Left cardiac atrium (tissue), 4 donors: ENCODE measurements at regions of chr2 and their contacts with region 1.

Region 1: DNA sequence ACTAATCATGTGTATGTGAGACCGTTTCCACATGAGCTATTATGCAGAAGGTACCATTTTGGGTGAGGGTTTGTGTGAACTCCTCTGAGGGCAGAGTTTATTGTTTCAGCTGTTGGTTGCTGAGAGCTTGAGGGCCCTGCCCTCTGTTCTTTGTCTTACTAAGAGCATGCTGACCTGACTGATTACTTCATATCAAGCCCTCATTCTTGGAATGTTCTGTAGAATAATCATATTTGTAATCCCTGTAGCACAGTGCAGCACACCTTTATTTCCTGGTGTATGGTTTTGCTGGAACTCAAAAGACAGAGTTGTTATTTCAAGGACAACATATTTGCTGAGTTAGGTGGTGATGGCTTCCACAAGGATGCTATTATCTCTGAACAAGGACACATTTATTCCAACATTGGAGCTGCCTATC is 118.5 kb downstream of the GALNT3 start:
- DNase-seq: no peak
- ATAC-seq: no peak

Region 2: DNA sequence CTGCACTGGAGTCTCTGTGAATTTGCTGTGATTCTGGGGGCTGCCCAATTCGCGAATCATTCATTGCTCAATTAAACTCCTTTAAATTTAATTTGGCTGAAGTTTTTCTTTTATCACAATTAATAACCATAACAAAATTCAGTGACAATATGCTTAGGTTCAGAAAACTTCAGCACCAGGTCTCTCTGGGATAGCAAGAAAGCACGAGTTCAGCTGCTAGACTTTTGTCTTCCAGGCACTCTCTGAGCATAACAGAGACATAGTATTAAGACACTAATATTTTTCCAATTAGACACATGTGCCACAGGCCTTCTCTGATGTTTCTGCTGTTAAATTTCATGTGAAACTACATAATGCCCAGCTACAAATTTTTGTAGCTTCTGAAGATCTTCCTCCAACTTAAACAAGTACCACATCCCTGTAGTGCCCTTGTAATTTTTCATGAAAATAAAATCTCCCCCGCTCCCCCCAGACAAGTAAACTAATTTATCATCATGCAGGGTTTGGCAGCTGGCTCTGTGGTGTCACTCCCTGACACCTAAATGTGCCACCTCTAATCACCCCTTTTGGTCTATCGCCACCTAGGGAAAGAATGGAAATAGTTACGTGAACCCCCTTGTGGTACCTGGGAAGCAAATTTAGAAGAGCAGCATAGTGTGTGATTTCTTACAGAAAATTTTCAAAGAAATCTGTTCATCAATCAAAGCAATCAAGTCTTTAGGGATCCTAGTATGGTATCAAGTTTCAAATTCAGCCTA is 111.9 kb before region 1 on chr2:
- intact Hi-C with region 1: no loop called
- DNase-seq: no peak
- ATAC-seq: no peak

Region 3: DNA sequence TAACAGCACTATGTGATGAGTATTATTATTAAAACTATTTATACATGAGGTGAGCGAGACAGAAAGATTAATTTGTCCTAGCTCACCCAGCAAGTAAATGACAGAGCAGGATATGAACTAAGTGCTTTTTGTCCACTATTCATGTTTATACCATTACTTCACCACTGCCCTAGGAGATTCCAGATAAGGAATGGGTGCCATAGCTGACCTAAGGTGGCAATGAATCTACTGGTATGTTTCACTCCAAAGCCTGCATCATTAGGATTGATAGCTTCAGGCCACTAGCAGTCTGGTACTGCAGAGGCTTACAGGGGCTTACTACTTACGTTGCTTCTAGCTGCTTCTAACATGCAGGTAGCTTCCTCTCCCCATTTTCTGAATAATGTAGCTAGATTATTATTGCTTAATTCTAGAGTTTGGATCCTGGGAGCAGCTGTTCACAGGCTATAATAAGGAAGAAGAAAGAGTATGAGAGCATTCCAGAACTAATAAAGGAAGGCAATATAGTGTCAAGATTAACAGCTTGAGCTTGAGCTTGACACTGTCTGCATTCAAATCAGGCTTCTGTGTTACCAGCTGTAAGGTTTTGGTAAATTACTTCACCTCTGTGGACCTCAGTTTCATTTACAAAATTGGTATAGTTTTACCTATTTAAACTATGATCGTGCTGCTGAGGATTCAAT is 35.2 kb before region 1 on chr2:
- intact Hi-C with region 1: loop called in 1 of 2 experiments (anchors 5 kb)
- DNase-seq: no peak
- ATAC-seq: peak; percentile 15 to 85